Dendritic cell treated with granulocyte-macrophage colony-stimulating factor and Interleukin-4, amounts not matched to agents 40 ng/mL and 50 ng/mL, for 4 days (primary cell): ENCODE measurements at regions of chr7 and their contacts with region 1.

Region 1: GRCh38 chr7:80624763-80625162 is 13.7 kb upstream of the CD36 start:
- H3K4me3 Mint-ChIP-seq: no peak overlapping the region
- H3K27ac Mint-ChIP-seq: no peak overlapping the region
- H3K4me1 Mint-ChIP-seq: peaks cover 31% of the 10 kb centered on the region
- H3K27me3 Mint-ChIP-seq: peaks cover 2% of the 10 kb centered on the region

Region 2: GRCh38 chr7:80593869-80594582 is 30.7 kb before region 1 on chr7:
- intact Hi-C with region 1: loop called (anchors 5 kb)
- H3K4me3 Mint-ChIP-seq: no peak overlapping the region
- H3K27ac Mint-ChIP-seq: no peak overlapping the region
- H3K4me1 Mint-ChIP-seq: peaks cover 18% of the 10 kb centered on the region
- H3K27me3 Mint-ChIP-seq: no peaks in the 10 kb centered on the region